ENCODE measurements at regions of chr7 and their contacts with region 1.

Region 1: GRCh38 chr7:150567169-150567568 is at the start of gene GIMAP4:
- DNase-seq: peak in 4 of 5 donors; percentile 35 to 50 (median 37)
- H3K4me3 ChIP-seq: peak within 1 kb of the TSS; percentile 92 to 96
- H3K4me3 Mint-ChIP-seq: peak within 1 kb of the TSS; percentile 98 to 100 (median 100)
- H3K27ac ChIP-seq: peak within 1 kb of the TSS; percentile 70
- H3K27ac Mint-ChIP-seq: peak within 1 kb of the TSS; percentile 86 to 99 (median 96)
- H3K4me1 ChIP-seq: peaks cover 73% of the 10 kb centered on the region
- H3K4me1 Mint-ChIP-seq: peaks cover 49 to 80% (median 63%) of the 10 kb centered on the region in 4 donors
- H3K27me3 ChIP-seq: no peaks in the 10 kb centered on the region
- H3K27me3 Mint-ChIP-seq: no peaks in the 10 kb centered on the region
- total RNA-seq, gene GIMAP4: 418 to 448 TPM

Region 2: GRCh38 chr7:150448789-150449147 is 118.4 kb before region 1 on chr7:
- CTCF ChIA-PET with region 1: interaction called, 107 read pairs
- POLR2A ChIA-PET with region 1: interaction called, 355 read pairs
- intact Hi-C with region 1: loop called (anchors 1 kb)
- DNase-seq: peak; percentile 88 to 91 (median 89)
- H3K4me3 ChIP-seq: peak overlapping the region in 1 of 2 donors; percentile 36
- H3K4me3 Mint-ChIP-seq: peak overlapping the region; percentile 78 to 100 (median 100)
- H3K27ac ChIP-seq: peak overlapping the region; percentile 84
- H3K27ac Mint-ChIP-seq: peak overlapping the region; percentile 84 to 98 (median 96)
- H3K4me1 ChIP-seq: peaks cover 51% of the 10 kb centered on the region
- H3K4me1 Mint-ChIP-seq: peaks cover 34 to 64% (median 46%) of the 10 kb centered on the region in 4 donors
- H3K27me3 ChIP-seq: no peaks in the 10 kb centered on the region
- H3K27me3 Mint-ChIP-seq: no peaks in the 10 kb centered on the region

Region 3: DNA sequence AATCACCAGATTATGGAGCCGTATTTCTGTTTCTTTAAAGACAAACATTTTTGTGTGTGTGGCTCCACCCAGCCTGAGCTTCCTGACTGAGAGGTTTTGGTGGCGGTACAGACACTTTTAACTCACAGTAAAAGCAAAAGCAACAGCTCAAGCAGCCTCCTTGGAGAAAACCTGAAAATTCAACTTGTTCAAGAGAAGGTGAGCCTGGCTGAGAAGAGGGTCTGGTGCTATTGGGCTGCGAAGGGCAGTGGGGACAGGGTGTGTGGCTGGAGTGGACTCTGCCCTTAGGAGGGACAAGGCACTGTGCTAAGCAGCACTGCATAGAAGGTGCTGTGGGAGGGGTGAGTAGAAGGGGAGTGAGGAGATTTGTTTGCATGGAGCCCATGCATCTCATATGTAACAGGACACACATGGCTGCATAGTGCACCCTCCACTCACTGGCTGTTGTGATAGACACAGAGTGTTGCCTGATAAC is 52.4 kb before region 1 on chr7 and contains the start of gene GIMAP7:
- CTCF ChIA-PET with region 1: interaction called, 21 read pairs
- POLR2A ChIA-PET with region 1: interaction called, 777 read pairs
- intact Hi-C with region 1: loop called (anchors 1 kb)
- DNase-seq: peak; percentile 77 to 84 (median 79)
- H3K4me3 ChIP-seq: peak within 1 kb of the TSS; percentile 92 to 99
- H3K4me3 Mint-ChIP-seq: peak within 1 kb of the TSS; percentile 97 to 100 (median 100)
- H3K27ac ChIP-seq: peak within 1 kb of the TSS; percentile 77
- H3K27ac Mint-ChIP-seq: peak within 1 kb of the TSS; percentile 94 to 99 (median 97)
- H3K4me1 ChIP-seq: peaks cover 47% of the 10 kb centered on the region
- H3K4me1 Mint-ChIP-seq: peaks cover 36 to 54% (median 42%) of the 10 kb centered on the region in 4 donors
- H3K27me3 ChIP-seq: no peaks in the 10 kb centered on the region
- H3K27me3 Mint-ChIP-seq: no peaks in the 10 kb centered on the region
- total RNA-seq, gene GIMAP7: 464 to 476 TPM

Region 4: GRCh38 chr7:150586785-150587152 is 19.6 kb after region 1 on chr7:
- CTCF ChIA-PET with region 1: interaction called, 3 read pairs
- POLR2A ChIA-PET with region 1: interaction called, 55 read pairs
- intact Hi-C with region 1: no loop called
- DNase-seq: no peak
- H3K4me3 ChIP-seq: no peak overlapping the region
- H3K4me3 Mint-ChIP-seq: peak overlapping the region in 5 of 8 donors; percentile 4 to 70 (median 54)
- H3K27ac ChIP-seq: no peak overlapping the region
- H3K27ac Mint-ChIP-seq: peak overlapping the region; percentile 1 to 85 (median 65)
- H3K4me1 ChIP-seq: peaks cover 40% of the 10 kb centered on the region
- H3K4me1 Mint-ChIP-seq: peaks cover 42 to 71% (median 58%) of the 10 kb centered on the region in 4 donors
- H3K27me3 ChIP-seq: no peaks in the 10 kb centered on the region
- H3K27me3 Mint-ChIP-seq: no peaks in the 10 kb centered on the region

Region 5: GRCh38 chr7:150668472-150668911 is 101.3 kb after region 1 on chr7:
- CTCF ChIA-PET with region 1: interaction called, 8 read pairs
- POLR2A ChIA-PET with region 1: interaction called, 73 read pairs
- intact Hi-C with region 1: no loop called
- DNase-seq: peak; percentile 80 to 88 (median 85)
- H3K4me3 ChIP-seq: peak overlapping the region; percentile 2 to 26
- H3K4me3 Mint-ChIP-seq: peak overlapping the region; percentile 55 to 84 (median 72)
- H3K27ac ChIP-seq: peak overlapping the region; percentile 68
- H3K27ac Mint-ChIP-seq: peak overlapping the region; percentile 82 to 99 (median 98)
- H3K4me1 ChIP-seq: peaks cover 92% of the 10 kb centered on the region
- H3K4me1 Mint-ChIP-seq: peaks cover 63 to 95% (median 79%) of the 10 kb centered on the region in 4 donors
- H3K27me3 ChIP-seq: no peaks in the 10 kb centered on the region
- H3K27me3 Mint-ChIP-seq: no peaks in the 10 kb centered on the region

Region 6: DNA sequence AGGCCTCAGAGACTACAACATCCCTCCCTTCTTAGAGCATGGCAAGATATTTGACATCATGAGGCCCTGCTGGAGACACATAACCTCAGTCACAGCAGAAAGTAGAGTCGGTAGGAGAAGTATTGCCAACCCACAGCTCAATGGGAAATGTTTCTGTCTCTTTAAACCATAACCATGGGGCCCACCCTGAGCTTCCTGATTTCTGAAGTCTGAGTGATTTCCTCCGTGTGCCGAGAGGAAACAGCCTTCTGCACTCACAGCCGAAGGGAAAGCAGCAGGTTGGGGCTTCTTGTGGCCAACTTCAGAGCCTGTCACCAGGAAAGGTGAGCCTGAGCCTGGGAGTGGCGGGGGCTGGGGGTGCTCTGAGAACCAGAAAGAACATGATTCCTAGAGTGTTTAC is 149.2 kb after region 1 on chr7 and contains the start of gene GIMAP1:
- CTCF ChIA-PET with region 1: interaction called, 29 read pairs
- POLR2A ChIA-PET with region 1: interaction called, 170 read pairs
- intact Hi-C with region 1: no loop called
- DNase-seq: peak; percentile 74 to 80 (median 79)
- H3K4me3 ChIP-seq: peak within 1 kb of the TSS; percentile 74 to 83
- H3K4me3 Mint-ChIP-seq: peak within 1 kb of the TSS; percentile 94 to 100 (median 98)
- H3K27ac ChIP-seq: peak within 1 kb of the TSS; percentile 74
- H3K27ac Mint-ChIP-seq: peak within 1 kb of the TSS; percentile 88 to 98 (median 97)
- H3K4me1 ChIP-seq: peaks cover 56% of the 10 kb centered on the region
- H3K4me1 Mint-ChIP-seq: peaks cover 48 to 79% (median 65%) of the 10 kb centered on the region in 4 donors
- H3K27me3 ChIP-seq: no peaks in the 10 kb centered on the region
- H3K27me3 Mint-ChIP-seq: no peaks in the 10 kb centered on the region
- total RNA-seq, gene GIMAP1: 93.7 to 97.6 TPM

Region 7: GRCh38 chr7:150753826-150754603 is 186.8 kb after region 1 on chr7:
- CTCF ChIA-PET with region 1: interaction called, 55 read pairs
- POLR2A ChIA-PET with region 1: interaction called, 235 read pairs
- intact Hi-C with region 1: loop called (anchors 1 kb)
- DNase-seq: peak in 1 of 5 donors; percentile 45
- H3K4me3 ChIP-seq: no peak overlapping the region
- H3K4me3 Mint-ChIP-seq: peak overlapping the region in 7 of 8 donors; percentile 8 to 76 (median 52)
- H3K27ac ChIP-seq: peak overlapping the region; percentile 37
- H3K27ac Mint-ChIP-seq: peak overlapping the region; percentile 90 to 97 (median 93)
- H3K4me1 ChIP-seq: peaks cover 80% of the 10 kb centered on the region
- H3K4me1 Mint-ChIP-seq: peaks cover 56 to 79% (median 68%) of the 10 kb centered on the region in 4 donors
- H3K27me3 ChIP-seq: no peaks in the 10 kb centered on the region
- H3K27me3 Mint-ChIP-seq: peaks cover 0 to 2% of the 10 kb centered on the region in 2 donors

Region 8: DNA sequence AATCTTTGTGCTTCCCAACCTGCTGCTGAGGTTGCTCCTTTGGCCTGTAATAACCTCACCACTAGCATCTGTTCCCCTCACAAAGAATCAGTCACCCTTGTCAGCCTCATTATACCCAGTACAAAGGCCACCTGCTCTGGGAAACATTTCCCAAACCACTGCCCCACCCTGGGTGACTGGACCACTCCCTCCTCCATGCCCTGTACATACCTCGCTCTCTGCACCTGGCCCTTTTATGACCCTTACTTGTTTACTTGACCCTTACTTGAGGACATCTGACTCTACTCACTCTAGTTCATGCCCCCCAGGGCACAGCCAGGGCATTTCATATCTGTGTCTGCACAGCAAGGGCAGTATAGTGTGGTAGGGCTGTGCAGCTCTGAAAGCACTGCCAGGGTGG is 263.8 kb after region 1 on chr7:
- CTCF ChIA-PET with region 1: no interaction called
- POLR2A ChIA-PET with region 1: no interaction called
- intact Hi-C with region 1: no loop called
- DNase-seq: no peak
- H3K4me3 ChIP-seq: no peak overlapping the region
- H3K4me3 Mint-ChIP-seq: no peak overlapping the region
- H3K27ac ChIP-seq: no peak overlapping the region
- H3K27ac Mint-ChIP-seq: no peak overlapping the region
- H3K4me1 ChIP-seq: no peaks in the 10 kb centered on the region
- H3K4me1 Mint-ChIP-seq: no peaks in the 10 kb centered on the region
- H3K27me3 ChIP-seq: no peaks in the 10 kb centered on the region
- H3K27me3 Mint-ChIP-seq: peaks cover 14 to 35% of the 10 kb centered on the region in 2 donors